ENCODE measurements at regions of chr5 and their contacts with region 1.

Region 1: DNA sequence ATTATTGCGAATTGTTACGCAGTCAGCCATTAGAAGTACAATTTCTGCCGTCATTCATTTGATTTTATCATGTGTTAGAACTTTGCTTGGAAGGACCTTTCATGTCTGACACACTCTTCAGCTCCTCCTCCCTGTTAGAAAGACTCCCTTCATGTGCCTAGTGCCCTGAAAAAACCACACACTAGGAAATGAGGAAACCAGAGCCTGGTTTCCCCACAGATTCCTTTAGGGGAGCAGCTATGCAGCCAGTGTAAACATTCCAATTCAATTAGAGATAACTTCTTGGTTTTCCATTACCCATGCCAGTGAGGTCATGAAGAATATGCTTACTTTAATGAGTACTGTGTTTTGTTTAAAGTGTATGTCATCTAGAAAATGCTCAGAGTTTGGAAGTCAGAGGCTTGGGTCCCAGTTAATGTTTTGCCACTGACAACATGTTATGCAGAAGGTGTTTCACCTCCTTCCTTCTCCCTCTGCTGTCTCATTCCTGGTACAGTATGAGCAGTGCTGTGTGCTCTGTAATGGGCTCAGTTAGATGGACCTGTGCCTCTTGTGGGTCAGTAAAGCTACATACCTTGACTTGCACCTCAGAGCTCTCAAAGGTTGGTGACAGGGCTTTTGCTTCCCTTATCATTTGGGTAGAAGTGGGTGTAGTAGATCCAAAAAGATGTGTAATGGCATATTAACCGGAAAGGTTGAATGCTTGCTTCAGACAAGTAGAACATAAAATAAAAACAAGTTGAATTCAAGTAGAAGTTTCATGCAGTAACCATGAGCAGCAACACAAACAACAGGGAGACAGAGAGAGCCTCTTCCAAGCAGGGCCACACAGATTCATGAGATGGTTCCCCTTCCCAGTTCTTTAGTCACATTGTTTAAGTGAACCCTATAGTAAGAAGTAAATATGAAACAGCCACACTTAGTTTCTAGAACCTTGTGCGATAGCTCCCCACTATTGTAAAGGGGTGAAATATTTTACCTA is 52.6 kb upstream of the TNFAIP8 start:
- DNase-seq: no peak
- ATAC-seq: peak; percentile 68
- H3K4me3 Mint-ChIP-seq: peak overlapping the region; percentile 12
- H3K27ac Mint-ChIP-seq: peak overlapping the region; percentile 84
- H3K4me1 Mint-ChIP-seq: peaks cover 90% of the 10 kb centered on the region
- H3K27me3 Mint-ChIP-seq: no peaks in the 10 kb centered on the region

Region 2: GRCh38 chr5:119290161-119290569 is 13.0 kb before region 1 on chr5:
- CTCF ChIA-PET with region 1: interaction called, 10 read pairs
- POLR2A ChIA-PET with region 1: no interaction called
- intact Hi-C with region 1: loop called in 1 of 2 experiments (anchors 2 kb)
- DNase-seq: no peak
- ATAC-seq: peak; percentile 55
- H3K4me3 Mint-ChIP-seq: peak overlapping the region; percentile 0
- H3K27ac Mint-ChIP-seq: peak overlapping the region; percentile 93
- H3K4me1 Mint-ChIP-seq: peaks cover 84% of the 10 kb centered on the region
- H3K27me3 Mint-ChIP-seq: no peaks in the 10 kb centered on the region

Measured in activated CD4-positive, alpha-beta T cell treated with anti-CD3 and anti-CD28 coated beads for 36 hours (primary cell).